ENCODE measurements at regions of chr20 and their contacts with region 1.

Region 1: DNA sequence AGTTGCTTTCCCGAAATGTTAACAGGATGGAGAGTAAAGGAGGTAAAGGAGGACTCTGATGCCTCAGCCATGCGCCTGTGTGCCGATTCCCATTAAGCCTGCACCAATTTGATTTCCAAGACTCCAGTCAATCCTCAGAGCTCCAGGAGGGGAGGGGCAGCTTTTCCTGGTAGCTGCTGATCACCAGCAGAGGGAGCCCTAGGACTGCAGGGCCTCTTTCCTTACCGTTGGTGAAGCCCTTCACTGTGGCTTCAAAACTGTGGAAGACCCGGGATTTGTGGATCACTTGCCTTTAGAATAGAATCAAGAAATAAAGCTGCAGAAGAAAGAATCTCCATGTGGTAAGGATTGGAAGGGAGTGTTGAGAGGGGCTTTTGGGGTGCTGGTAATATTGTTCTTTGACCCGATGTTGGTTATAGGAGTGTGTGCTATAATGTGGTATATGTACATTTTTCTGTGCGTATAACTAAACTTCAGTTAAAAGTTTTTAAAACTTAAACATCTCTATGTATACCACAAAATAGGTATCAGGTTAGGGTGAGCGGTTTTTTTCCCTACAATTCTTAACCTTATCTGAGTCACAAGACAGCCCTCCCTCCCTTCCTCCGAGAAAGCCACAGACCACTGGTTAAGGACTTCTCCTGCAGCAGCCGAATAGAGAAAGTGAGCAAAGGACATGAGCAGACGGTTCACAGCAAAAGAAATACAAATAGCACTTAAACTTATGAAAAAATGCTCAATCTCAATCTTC is 6.9 kb upstream of the OSER1 start:
- DNase-seq: peak; percentile 71
- ATAC-seq: peak; percentile 87

Region 2: GRCh38 chr20:43728044-43728529 is 489.4 kb before region 1 on chr20:
- intact Hi-C with region 1: no loop called
- DNase-seq: no peak
- ATAC-seq: no peak

Region 3: GRCh38 chr20:44310664-44311639 is 93.4 kb after region 1 on chr20 and contains the start of gene FITM2:
- intact Hi-C with region 1: loop called (anchors 2 kb)
- DNase-seq: peak; percentile 100
- ATAC-seq: peak; percentile 86
- total RNA-seq, gene FITM2: 150 TPM

Region 4: DNA sequence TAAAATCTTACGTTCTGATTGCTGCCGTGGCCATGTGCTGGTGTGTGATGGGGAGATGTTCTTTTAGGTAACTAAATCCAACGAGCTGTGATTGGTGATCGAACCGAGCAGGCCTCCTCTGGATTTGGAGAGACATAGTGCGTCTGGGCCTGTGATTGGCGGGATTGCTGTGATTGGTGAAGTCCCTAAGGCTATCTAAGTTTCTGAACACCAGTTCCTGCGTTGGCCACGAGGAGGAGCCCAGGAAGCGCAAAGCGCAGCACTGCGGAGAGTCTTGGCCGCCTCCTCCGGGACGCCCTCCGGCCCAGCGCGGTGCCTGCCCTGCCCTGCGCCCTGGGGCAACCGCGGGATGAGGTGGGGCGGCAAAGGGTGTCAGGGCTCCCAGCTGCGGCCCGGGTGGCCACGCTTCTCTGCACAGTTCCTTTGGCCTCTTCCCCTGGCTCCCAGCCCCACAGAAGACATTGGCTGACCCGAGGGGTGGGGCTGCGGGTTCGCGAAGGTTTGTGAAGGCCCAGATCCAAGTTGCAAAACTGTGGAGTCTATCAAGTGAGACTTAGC is 171.0 kb after region 1 on chr20:
- intact Hi-C with region 1: loop called (anchors 5 kb)
- DNase-seq: peak; percentile 79
- ATAC-seq: peak; percentile 78

Region 5: GRCh38 chr20:44460795-44461141 is 243.3 kb after region 1 on chr20:
- intact Hi-C with region 1: loop called (anchors 2 kb)
- DNase-seq: no peak
- ATAC-seq: peak; percentile 53

Region 6: GRCh38 chr20:44625361-44625760 is 407.8 kb after region 1 on chr20:
- intact Hi-C with region 1: no loop called
- DNase-seq: peak; percentile 36
- ATAC-seq: no peak

Measured in Right ventricle myocardium superior (tissue), 1 donor.